ENCODE measurements at regions of chr12 and their contacts with region 1.

Region 1: DNA sequence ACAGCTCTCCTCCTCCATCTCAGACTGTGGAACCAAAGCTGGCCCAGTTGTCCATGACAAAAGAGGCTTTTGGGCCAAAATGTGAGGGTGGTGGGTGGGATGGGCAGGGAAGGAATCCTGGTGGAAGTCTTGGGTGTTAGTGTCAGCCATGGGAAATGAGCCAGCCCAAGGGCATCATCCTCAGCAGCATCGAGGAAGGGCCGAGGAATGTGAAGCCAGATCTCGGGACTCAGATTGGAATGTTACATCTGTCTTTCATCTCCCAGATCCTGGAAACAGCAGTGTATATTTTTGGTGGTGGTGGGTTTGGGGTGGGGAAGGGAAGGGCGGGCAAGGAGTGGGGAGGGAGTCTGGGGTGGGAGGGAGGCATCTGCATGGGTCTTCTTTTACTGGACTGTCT is 11.8 kb upstream of the TAMALIN start:
- DNase-seq: no peak
- H3K4me3 Mint-ChIP-seq: no peak overlapping the region
- H3K27ac Mint-ChIP-seq: no peak overlapping the region
- H3K4me1 Mint-ChIP-seq: peaks cover 6% of the 10 kb centered on the region
- H3K27me3 Mint-ChIP-seq: no peaks in the 10 kb centered on the region

Region 2: GRCh38 chr12:51980051-51980808 is 14.7 kb before region 1 on chr12:
- CTCF ChIA-PET with region 1: interaction called, 12 read pairs
- POLR2A ChIA-PET with region 1: no interaction called
- DNase-seq: peak; percentile 74
- H3K4me3 Mint-ChIP-seq: no peak overlapping the region
- H3K27ac Mint-ChIP-seq: peak overlapping the region; percentile 62
- H3K4me1 Mint-ChIP-seq: peaks cover 28% of the 10 kb centered on the region
- H3K27me3 Mint-ChIP-seq: no peaks in the 10 kb centered on the region